Activated CD4-positive, alpha-beta T cell treated with anti-CD3 and anti-CD28 coated beads for 36 hours (primary cell): ENCODE measurements at regions of chr10 and their contacts with region 1.

Region 1: DNA sequence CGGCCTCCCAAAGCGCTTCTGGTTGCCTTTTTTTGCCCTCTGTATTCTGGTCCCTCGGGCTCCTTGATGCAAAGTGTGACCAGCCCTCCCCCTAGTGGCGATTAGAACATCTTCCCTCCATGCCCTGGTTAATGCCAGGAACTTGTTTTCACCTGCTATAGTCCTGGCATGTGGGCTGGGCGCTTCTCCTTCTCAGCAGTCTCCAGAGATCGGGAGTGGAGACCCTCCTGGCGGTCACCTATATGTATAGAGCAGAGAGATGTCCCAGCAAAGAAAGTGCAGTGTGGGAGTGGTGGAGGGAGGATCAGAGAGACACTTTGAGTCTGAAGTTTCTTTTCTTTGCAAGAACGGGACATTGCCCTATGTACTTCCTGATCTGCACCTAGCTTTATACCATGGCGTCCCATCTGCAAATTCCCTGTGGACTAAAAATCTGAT is 264.1 kb downstream of the OTUD1 start:
- DNase-seq: peak; percentile 75
- ATAC-seq: peak; percentile 90
- H3K4me3 Mint-ChIP-seq: no peak overlapping the region
- H3K27ac Mint-ChIP-seq: no peak overlapping the region
- H3K4me1 Mint-ChIP-seq: peaks cover 4% of the 10 kb centered on the region
- H3K27me3 Mint-ChIP-seq: peaks cover 25% of the 10 kb centered on the region

Region 2: DNA sequence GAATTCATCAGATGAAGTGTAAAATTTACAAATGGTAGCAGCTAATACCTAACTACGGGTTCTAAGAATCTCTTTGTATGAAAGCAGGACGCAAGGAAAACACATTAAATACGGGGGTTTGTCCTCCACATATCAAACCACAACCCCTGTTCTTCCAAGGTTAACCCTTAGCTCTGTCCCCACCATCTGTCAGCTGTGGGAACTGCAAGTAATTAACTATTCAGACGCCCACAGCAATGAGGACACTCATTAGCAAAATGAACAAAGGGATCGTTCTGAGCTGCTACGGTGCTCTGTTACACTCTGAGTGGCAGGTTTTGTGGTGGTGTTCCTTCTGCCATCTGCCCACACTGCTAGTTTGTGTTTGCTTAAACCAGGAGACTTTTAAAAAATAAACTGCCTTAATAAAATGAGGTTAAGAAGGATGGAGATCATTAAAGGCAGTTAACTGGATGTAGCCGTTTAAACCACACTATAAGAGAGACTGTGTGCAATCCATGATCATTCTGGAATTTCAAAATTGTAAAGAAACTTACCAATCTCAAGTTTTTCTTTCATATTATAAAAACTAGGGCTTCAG is 409.8 kb before region 1 on chr10:
- CTCF ChIA-PET with region 1: no interaction called
- POLR2A ChIA-PET with region 1: no interaction called
- intact Hi-C with region 1: loop called in 1 of 2 experiments (anchors 5 kb)
- DNase-seq: peak; percentile 66
- ATAC-seq: peak; percentile 78
- H3K4me3 Mint-ChIP-seq: no peak overlapping the region
- H3K27ac Mint-ChIP-seq: no peak overlapping the region
- H3K4me1 Mint-ChIP-seq: no peaks in the 10 kb centered on the region
- H3K27me3 Mint-ChIP-seq: peaks cover 9% of the 10 kb centered on the region

Region 3: DNA sequence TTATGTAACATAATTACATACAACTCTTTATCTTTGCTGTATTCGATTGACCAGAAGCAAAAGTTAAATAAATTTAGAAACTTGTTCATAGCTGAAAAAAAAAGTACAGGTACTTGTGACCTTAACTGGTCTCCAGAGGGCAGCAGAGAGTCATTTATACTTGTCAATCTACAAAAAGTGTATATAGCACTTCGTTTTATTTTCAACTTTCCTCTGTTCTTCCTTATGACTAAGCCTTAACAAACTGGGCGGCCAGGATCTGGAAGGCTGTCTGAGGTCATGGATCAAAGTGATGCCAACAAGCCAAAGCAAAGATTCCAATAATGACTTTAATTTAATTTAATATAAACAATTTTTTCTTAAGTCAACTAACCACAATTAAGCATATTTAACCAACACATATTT is 388.2 kb before region 1 on chr10:
- CTCF ChIA-PET with region 1: interaction called, 9 read pairs
- POLR2A ChIA-PET with region 1: no interaction called
- intact Hi-C with region 1: loop called (anchors 1 to 2 kb)
- DNase-seq: peak; percentile 63
- ATAC-seq: peak; percentile 36
- H3K4me3 Mint-ChIP-seq: no peak overlapping the region
- H3K27ac Mint-ChIP-seq: no peak overlapping the region
- H3K4me1 Mint-ChIP-seq: no peaks in the 10 kb centered on the region
- H3K27me3 Mint-ChIP-seq: no peaks in the 10 kb centered on the region

Region 4: DNA sequence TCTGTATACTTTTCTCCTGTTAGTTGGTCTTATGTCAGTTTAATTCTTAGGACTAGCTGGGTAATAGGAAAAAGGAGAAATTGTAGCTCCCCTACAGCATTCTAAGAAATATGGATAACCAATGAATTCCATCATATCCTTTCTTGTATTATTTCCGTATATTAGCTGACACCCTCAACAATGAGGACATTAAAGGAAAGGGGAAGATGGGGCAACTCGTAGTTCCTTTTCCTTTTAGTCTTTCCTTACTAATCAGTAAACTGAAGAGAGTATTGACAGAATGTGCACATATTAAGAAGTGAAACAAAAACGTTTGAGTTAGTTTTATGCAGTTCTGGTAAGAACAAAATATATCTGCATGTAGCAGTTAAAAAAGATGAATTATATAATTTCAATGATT is 323.3 kb before region 1 on chr10:
- CTCF ChIA-PET with region 1: no interaction called
- POLR2A ChIA-PET with region 1: no interaction called
- intact Hi-C with region 1: no loop called
- DNase-seq: no peak
- ATAC-seq: no peak
- H3K4me3 Mint-ChIP-seq: no peak overlapping the region
- H3K27ac Mint-ChIP-seq: no peak overlapping the region
- H3K4me1 Mint-ChIP-seq: peaks cover 6% of the 10 kb centered on the region
- H3K27me3 Mint-ChIP-seq: no peaks in the 10 kb centered on the region

Region 5: GRCh38 chr10:23516530-23516929 is 186.5 kb before region 1 on chr10:
- CTCF ChIA-PET with region 1: interaction called, 6 read pairs
- POLR2A ChIA-PET with region 1: no interaction called
- intact Hi-C with region 1: loop called in 1 of 2 experiments (anchors 5 kb)
- DNase-seq: no peak
- ATAC-seq: no peak
- H3K4me3 Mint-ChIP-seq: no peak overlapping the region
- H3K27ac Mint-ChIP-seq: no peak overlapping the region
- H3K4me1 Mint-ChIP-seq: peaks cover 11% of the 10 kb centered on the region
- H3K27me3 Mint-ChIP-seq: peaks cover 27% of the 10 kb centered on the region

Region 6: DNA sequence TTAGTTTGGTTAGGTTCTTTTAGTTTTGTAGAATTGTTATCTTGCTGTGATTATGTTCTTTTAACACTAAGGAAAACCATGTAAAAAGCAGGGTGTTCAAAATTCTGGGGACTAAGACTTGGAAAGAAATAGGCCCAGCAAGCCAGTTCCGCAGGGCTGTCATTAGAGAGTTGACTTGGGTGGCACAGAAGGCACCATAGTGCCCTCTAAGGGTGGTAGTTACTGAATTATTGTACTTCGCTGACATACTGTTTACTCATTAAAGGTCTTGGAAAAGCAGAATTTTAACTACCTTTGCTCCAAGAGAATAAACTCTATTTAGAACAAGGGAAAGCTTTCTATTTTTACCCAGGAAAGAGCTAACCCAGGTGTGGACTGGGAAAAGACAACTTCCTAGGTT is 177.6 kb before region 1 on chr10:
- CTCF ChIA-PET with region 1: interaction called, 3 read pairs
- POLR2A ChIA-PET with region 1: no interaction called
- intact Hi-C with region 1: loop called in 1 of 2 experiments (anchors 5 kb)
- DNase-seq: peak; percentile 26
- ATAC-seq: peak; percentile 47
- H3K4me3 Mint-ChIP-seq: no peak overlapping the region
- H3K27ac Mint-ChIP-seq: no peak overlapping the region
- H3K4me1 Mint-ChIP-seq: peaks cover 3% of the 10 kb centered on the region
- H3K27me3 Mint-ChIP-seq: peaks cover 5% of the 10 kb centered on the region

Region 7: GRCh38 chr10:23535381-23535780 is 167.6 kb before region 1 on chr10:
- CTCF ChIA-PET with region 1: no interaction called
- POLR2A ChIA-PET with region 1: no interaction called
- intact Hi-C with region 1: loop called in 1 of 2 experiments (anchors 5 kb)
- DNase-seq: no peak
- ATAC-seq: no peak
- H3K4me3 Mint-ChIP-seq: no peak overlapping the region
- H3K27ac Mint-ChIP-seq: no peak overlapping the region
- H3K4me1 Mint-ChIP-seq: peaks cover 62% of the 10 kb centered on the region
- H3K27me3 Mint-ChIP-seq: no peaks in the 10 kb centered on the region